ENCODE measurements at regions of chr7 and their contacts with region 1.

Region 1: GRCh38 chr7:121442845-121443244 is 46.7 kb upstream of the FAM3C start:
- DNase-seq: peak; percentile 85 to 98
- H3K4me3 ChIP-seq: no peak overlapping the region
- H3K27ac ChIP-seq: peak overlapping the region; percentile 0; the same call in 1 of the 2 replicates
- H3K4me1 ChIP-seq: peaks cover 18% of the 10 kb centered on the region; the same call in 1 of the 2 replicates
- H3K27me3 ChIP-seq: no peaks in the 10 kb centered on the region
- CTCF ChIP-seq: no peak

Region 2: GRCh38 chr7:121123033-121123432 is 319.8 kb before region 1 on chr7:
- CTCF ChIA-PET with region 1: no interaction called
- POLR2A ChIA-PET with region 1: no interaction called
- intact Hi-C with region 1: no loop called
- DNase-seq: no peak
- H3K4me3 ChIP-seq: no peak overlapping the region
- H3K27ac ChIP-seq: no peak overlapping the region
- H3K4me1 ChIP-seq: no peaks in the 10 kb centered on the region
- H3K27me3 ChIP-seq: no peaks in the 10 kb centered on the region
- CTCF ChIP-seq: no peak

Region 3: GRCh38 chr7:121395961-121396757 is 46.7 kb before region 1 on chr7 and contains the start of gene FAM3C:
- CTCF ChIA-PET with region 1: interaction called, 6 read pairs
- POLR2A ChIA-PET with region 1: interaction called, 5 read pairs
- intact Hi-C with region 1: loop called (anchors 2 kb)
- DNase-seq: peak; percentile 80 to 98
- H3K4me3 ChIP-seq: peak within 1 kb of the TSS; percentile 94
- H3K27ac ChIP-seq: peak within 1 kb of the TSS; percentile 74
- H3K4me1 ChIP-seq: peaks cover 22% of the 10 kb centered on the region
- H3K27me3 ChIP-seq: no peaks in the 10 kb centered on the region
- CTCF ChIP-seq: peak; percentile 88
- total RNA-seq, gene FAM3C: 117 and 134 TPM in 2 replicates

Region 4: DNA sequence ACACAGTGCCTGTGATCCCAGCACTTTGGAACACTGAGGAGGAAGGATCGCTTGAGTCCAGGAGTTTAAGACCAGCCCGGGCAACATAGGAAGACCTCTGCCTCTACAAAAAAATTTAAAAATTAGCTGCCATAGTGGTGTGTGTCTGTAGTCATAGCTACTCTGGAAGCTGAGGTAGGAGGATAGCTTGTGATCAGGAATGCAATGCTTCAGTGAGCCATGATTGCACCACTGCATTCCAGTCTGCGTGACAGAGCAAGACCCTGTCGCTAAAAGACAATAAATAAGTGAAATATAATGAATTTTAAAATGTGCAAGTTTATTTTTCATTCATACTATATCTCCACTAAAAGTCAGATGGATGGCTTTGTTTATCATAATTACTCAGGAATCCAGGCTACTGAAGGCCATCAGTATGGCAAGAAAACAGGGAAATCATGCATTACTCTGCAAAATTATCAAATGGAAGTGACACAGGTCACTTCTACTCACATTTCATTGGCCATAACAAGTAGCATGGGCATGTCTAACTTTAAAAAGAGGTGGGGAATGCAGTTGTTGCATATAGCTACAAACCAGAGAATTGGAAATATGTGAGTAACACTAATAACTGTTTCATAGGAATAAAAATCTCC is 13.9 kb before region 1 on chr7:
- CTCF ChIA-PET with region 1: no interaction called
- POLR2A ChIA-PET with region 1: interaction called, 28 read pairs
- intact Hi-C with region 1: loop called (anchors 2 kb)
- DNase-seq: peak; percentile 17 to 38
- H3K4me3 ChIP-seq: no peak overlapping the region
- H3K27ac ChIP-seq: no peak overlapping the region
- H3K4me1 ChIP-seq: peaks cover 5% of the 10 kb centered on the region; the same call in 1 of the 2 replicates
- H3K27me3 ChIP-seq: no peaks in the 10 kb centered on the region
- CTCF ChIP-seq: no peak

Region 5: GRCh38 chr7:121530227-121531174 is 87.7 kb after region 1 on chr7:
- CTCF ChIA-PET with region 1: interaction called, 3 read pairs
- POLR2A ChIA-PET with region 1: interaction called, 4 read pairs
- intact Hi-C with region 1: loop called (anchors 1 kb)
- DNase-seq: peak; percentile 85 to 99
- H3K4me3 ChIP-seq: peak overlapping the region; percentile 42; the same call in 1 of the 2 replicates
- H3K27ac ChIP-seq: peak overlapping the region; percentile 97
- H3K4me1 ChIP-seq: peaks cover 41% of the 10 kb centered on the region
- H3K27me3 ChIP-seq: no peaks in the 10 kb centered on the region
- CTCF ChIP-seq: no peak; the same call in 1 of the 2 replicates

Region 6: DNA sequence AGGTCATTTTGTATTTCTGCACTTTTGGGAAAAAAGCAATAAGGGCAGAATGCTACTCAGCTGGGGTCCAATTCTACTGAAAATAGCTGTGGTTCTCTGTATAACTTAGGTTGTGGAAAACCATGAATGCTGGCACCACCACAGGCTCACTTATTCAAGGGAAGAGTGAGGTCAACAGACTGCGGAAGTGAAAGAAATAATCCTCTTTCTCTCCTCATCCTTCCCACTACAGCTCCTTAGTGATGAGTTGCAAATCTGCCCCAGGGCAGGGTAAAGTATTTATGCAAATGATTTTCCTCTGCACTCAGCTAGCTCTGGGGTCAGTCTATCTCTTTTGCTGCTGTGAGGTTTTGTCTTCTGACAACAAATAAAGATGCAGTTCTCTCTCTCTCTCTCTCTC is 356.1 kb after region 1 on chr7:
- CTCF ChIA-PET with region 1: no interaction called
- POLR2A ChIA-PET with region 1: no interaction called
- intact Hi-C with region 1: no loop called
- DNase-seq: no peak
- H3K4me3 ChIP-seq: no peak overlapping the region
- H3K27ac ChIP-seq: no peak overlapping the region
- H3K4me1 ChIP-seq: no peaks in the 10 kb centered on the region
- H3K27me3 ChIP-seq: no peaks in the 10 kb centered on the region
- CTCF ChIP-seq: no peak

Region 7: DNA sequence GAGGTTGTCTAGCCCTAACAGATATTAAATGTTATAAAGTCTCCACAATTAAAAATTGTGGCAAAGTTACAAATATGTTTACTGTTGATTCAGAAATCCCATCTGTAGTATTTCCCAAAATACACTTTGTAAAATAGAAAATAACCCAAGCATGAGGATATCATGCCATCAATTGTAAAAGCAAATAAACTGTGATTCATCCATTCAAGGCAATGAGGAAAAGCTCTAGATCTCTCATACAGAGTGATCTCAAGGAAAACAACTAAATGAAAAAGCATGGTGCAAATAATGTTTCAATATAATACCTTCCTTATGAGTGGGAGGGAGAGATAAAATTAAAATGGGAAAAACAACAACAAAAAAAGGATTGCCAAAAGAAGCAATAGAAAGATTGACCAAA is 1382.3 kb after region 1 on chr7:
- CTCF ChIA-PET with region 1: no interaction called
- POLR2A ChIA-PET with region 1: no interaction called
- intact Hi-C with region 1: no loop called
- DNase-seq: no peak
- H3K4me3 ChIP-seq: no peak overlapping the region
- H3K27ac ChIP-seq: no peak overlapping the region
- H3K4me1 ChIP-seq: no peaks in the 10 kb centered on the region
- H3K27me3 ChIP-seq: no peaks in the 10 kb centered on the region
- CTCF ChIP-seq: no peak